ENCODE measurements at regions of chr20 and their contacts with region 1.

Region 1: GRCh38 chr20:50992733-50993457 is 30.0 kb downstream of the KCNG1 start:
- DNase-seq: peak; percentile 74
- ATAC-seq: peak; percentile 100
- H3K4me3 Mint-ChIP-seq: no peak overlapping the region
- H3K27ac Mint-ChIP-seq: no peak overlapping the region
- H3K4me1 Mint-ChIP-seq: no peaks in the 10 kb centered on the region
- H3K27me3 Mint-ChIP-seq: no peaks in the 10 kb centered on the region
- CTCF ChIP-seq: peak; percentile 89

Region 2: DNA sequence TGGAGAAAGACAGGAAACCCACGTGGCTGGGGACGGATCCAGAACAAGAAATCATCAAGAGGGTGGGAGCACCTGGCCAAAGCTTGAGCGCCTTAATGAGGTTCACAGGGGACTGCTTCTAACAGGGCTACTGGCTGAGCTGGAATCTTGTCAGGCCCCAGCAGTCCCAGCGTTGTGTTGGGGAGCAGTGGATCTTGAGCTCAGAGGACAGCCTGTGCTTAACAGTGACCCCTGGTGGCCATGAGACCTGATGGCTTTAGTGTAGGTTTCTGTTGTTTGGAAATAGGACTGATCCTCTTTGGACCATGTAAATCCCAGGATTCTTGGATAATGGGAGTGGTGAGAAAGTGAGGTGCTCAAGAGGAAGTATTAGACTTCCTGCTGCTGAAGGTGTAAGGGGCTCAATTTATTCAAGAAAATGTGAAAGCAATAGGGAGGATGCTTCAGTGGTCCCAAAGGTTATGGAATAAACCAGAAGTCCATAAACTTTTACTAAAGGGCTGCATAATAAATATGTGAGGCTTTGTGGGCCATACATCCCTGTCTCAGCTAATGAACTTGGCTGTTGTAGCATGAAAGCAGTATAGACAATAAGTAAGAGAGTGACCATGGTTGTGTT is 333.4 kb after region 1 on chr20:
- CTCF ChIA-PET with region 1: interaction called, 30 read pairs
- POLR2A ChIA-PET with region 1: no interaction called
- intact Hi-C with region 1: no loop called
- DNase-seq: no peak
- ATAC-seq: no peak
- H3K4me3 Mint-ChIP-seq: no peak overlapping the region
- H3K27ac Mint-ChIP-seq: no peak overlapping the region
- H3K4me1 Mint-ChIP-seq: no peaks in the 10 kb centered on the region
- H3K27me3 Mint-ChIP-seq: no peaks in the 10 kb centered on the region
- CTCF ChIP-seq: peak; percentile 13